ENCODE measurements at regions of chr6 and their contacts with region 1.

Region 1: GRCh38 chr6:112043032-112044007 is 10.6 kb upstream of the CCN6 start:
- DNase-seq: peak; percentile 83
- H3K4me3 Mint-ChIP-seq: peak overlapping the region; percentile 92
- H3K27ac Mint-ChIP-seq: peak overlapping the region; percentile 92
- H3K4me1 Mint-ChIP-seq: peaks cover 42% of the 10 kb centered on the region
- H3K27me3 Mint-ChIP-seq: no peaks in the 10 kb centered on the region

Region 2: DNA sequence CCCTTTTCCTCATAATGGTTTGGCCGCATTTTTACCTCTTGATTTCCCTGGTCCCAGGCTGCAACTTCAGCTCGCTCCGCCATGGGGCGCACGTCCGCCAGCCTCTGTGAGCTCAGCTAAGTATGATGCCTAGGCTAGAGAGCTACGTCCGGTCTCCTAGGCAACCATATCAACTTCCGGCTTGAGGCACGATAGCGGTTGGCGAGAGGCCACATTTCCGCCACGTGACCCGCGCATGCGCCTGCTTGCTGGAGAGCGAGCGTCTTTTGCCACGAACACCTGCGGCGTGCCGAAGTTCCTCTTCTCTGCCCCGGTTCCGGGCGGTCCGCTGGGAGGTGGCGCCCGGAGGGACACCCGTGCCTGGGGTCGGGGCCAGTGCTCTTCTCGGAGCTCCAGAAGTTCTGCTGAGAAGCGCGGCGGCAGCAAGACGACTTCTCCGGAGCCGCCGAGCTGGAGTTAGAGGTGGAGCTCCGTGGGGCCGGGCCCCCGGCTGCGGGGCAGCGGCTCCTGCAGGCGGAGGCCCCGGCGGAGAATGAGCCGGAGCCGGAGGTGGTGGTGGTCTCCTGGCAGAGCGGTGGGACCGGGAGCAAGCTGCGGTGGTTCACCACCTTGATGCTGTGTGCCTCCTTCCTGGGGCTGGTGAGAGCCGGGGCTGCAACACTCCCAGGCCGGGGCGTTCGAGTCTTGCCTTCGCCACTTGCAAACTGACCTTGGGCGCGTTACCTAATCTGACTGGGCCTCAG is 784.1 kb before region 1 on chr6:
- intact Hi-C with region 1: loop called (anchors 1 kb)
- DNase-seq: peak; percentile 99
- H3K4me3 Mint-ChIP-seq: peak overlapping the region; percentile 81
- H3K27ac Mint-ChIP-seq: peak overlapping the region; percentile 87
- H3K4me1 Mint-ChIP-seq: peaks cover 34% of the 10 kb centered on the region
- H3K27me3 Mint-ChIP-seq: peaks cover 5% of the 10 kb centered on the region

Region 3: GRCh38 chr6:111534231-111534751 is 509.0 kb before region 1 on chr6:
- intact Hi-C with region 1: loop called (anchors 1 kb)
- DNase-seq: no peak
- H3K4me3 Mint-ChIP-seq: no peak overlapping the region
- H3K27ac Mint-ChIP-seq: no peak overlapping the region
- H3K4me1 Mint-ChIP-seq: peaks cover 49% of the 10 kb centered on the region
- H3K27me3 Mint-ChIP-seq: no peaks in the 10 kb centered on the region

Region 4: GRCh38 chr6:111804627-111805235 is 238.6 kb before region 1 on chr6:
- intact Hi-C with region 1: loop called (anchors 1 kb)
- DNase-seq: peak; percentile 67
- H3K4me3 Mint-ChIP-seq: peak overlapping the region; percentile 74
- H3K27ac Mint-ChIP-seq: peak overlapping the region; percentile 98
- H3K4me1 Mint-ChIP-seq: peaks cover 84% of the 10 kb centered on the region
- H3K27me3 Mint-ChIP-seq: no peaks in the 10 kb centered on the region

Region 5: DNA sequence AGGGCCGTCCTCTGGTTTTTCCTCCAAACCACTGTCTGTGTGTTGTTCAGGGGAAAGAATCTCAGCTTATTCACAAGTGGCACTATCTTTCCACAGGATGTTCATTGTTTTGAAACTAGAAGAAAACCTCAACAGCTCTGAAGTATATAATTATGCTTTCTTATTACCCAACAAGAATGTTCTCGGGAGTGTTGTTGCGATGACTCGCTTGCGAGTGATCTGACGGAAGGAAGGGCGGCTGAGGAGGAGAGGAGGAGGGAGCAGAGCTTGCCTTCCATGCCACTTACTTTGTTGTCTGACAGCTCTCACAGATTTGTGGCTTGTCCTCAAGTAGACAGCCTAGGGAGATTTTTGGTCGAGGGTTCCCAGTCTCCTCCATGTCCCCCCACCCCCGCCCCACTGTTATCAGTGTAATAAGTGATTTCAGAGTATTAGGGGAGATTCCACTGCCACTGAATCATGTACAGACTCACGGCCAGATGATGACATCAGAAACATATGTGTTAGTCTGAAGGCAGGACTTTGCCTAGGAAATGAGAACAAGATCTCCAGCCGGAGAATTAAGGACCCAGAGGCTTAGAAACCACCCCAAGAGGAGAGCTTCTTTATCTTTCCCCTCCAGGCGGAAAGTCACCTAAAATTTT is 70.1 kb before region 1 on chr6:
- intact Hi-C with region 1: loop called (anchors 1 kb)
- DNase-seq: peak; percentile 47
- H3K4me3 Mint-ChIP-seq: peak overlapping the region; percentile 53
- H3K27ac Mint-ChIP-seq: peak overlapping the region; percentile 87
- H3K4me1 Mint-ChIP-seq: peaks cover 55% of the 10 kb centered on the region
- H3K27me3 Mint-ChIP-seq: no peaks in the 10 kb centered on the region

Region 6: GRCh38 chr6:112029045-112029822 is 14.1 kb before region 1 on chr6:
- intact Hi-C with region 1: loop called (anchors 1 kb)
- DNase-seq: peak; percentile 51
- H3K4me3 Mint-ChIP-seq: no peak overlapping the region
- H3K27ac Mint-ChIP-seq: peak overlapping the region; percentile 68
- H3K4me1 Mint-ChIP-seq: peaks cover 74% of the 10 kb centered on the region
- H3K27me3 Mint-ChIP-seq: no peaks in the 10 kb centered on the region

Measured in activated T-helper 1 cell treated with anti-CD3 and anti-CD28 coated beads, Interleukin-12 subunit alpha, Interleukin-12 subunit beta, Interleukin-2, Interleukin-4 antibody, amounts not matched to agents 30 ng/mL and 10 ng/mL and 1 ng/mL, durations not matched to agents 14 hours and 24 hours and 36 hours (primary cell).